OCI-LY7 (cell line): ENCODE measurements at regions of chr12 and their contacts with region 1.

Region 1: DNA sequence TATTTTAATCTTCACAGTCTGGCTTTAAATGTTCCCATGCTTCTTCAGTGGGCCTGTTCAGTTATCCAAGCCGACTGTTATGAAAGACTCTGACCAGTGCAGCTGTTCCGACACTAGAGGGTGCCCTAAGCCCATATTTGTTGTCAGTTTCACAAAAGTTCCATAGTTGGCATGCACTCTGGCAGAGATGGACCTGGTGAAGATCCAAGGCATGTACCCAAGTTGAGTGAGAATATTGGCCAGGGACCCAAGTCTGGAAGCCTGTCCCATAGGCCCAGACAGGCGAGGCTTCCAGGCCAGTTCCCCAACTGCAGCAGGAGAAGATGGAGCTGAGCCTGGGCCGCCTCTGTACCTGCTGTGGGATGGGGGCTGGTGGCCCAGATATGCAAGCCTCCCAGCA is 27.4 kb upstream of the GUCY2C start:
- DNase-seq: peak; percentile 73
- H3K4me3 ChIP-seq: no peak overlapping the region
- H3K27ac ChIP-seq: no peak overlapping the region
- H3K4me1 ChIP-seq: no peaks in the 10 kb centered on the region
- CTCF ChIP-seq: peak; percentile 89

Region 2: GRCh38 chr12:14691560-14691959 is 32.2 kb before region 1 on chr12:
- CTCF ChIA-PET with region 1: no interaction called
- POLR2A ChIA-PET with region 1: no interaction called
- intact Hi-C with region 1: no loop called
- DNase-seq: no peak
- H3K4me3 ChIP-seq: no peak overlapping the region
- H3K27ac ChIP-seq: no peak overlapping the region
- H3K4me1 ChIP-seq: no peaks in the 10 kb centered on the region
- CTCF ChIP-seq: no peak

Region 3: GRCh38 chr12:15268927-15269552 is 545.3 kb after region 1 on chr12:
- CTCF ChIA-PET with region 1: no interaction called
- POLR2A ChIA-PET with region 1: no interaction called
- intact Hi-C with region 1: loop called (anchors 10 kb)
- DNase-seq: peak; percentile 66
- H3K4me3 ChIP-seq: no peak overlapping the region
- H3K27ac ChIP-seq: no peak overlapping the region
- H3K4me1 ChIP-seq: no peaks in the 10 kb centered on the region
- CTCF ChIP-seq: peak; percentile 96